ENCODE measurements at regions of chr4 and their contacts with region 1.

Region 1: GRCh38 chr4:173146451-173146850 is 22.2 kb upstream of the GALNT7 start:
- DNase-seq: no peak
- ATAC-seq: no peak
- H3K4me3 ChIP-seq: no peak overlapping the region
- H3K4me3 Mint-ChIP-seq: no peak overlapping the region
- H3K27ac ChIP-seq: no peak overlapping the region
- H3K27ac Mint-ChIP-seq: no peak overlapping the region
- H3K4me1 ChIP-seq: no peaks in the 10 kb centered on the region
- H3K4me1 Mint-ChIP-seq: no peaks in the 10 kb centered on the region
- H3K27me3 ChIP-seq: no peaks in the 10 kb centered on the region
- H3K27me3 Mint-ChIP-seq: no peaks in the 10 kb centered on the region
- CTCF ChIP-seq: no peak

Region 2: GRCh38 chr4:173111031-173111430 is 35.4 kb before region 1 on chr4:
- CTCF ChIA-PET with region 1: no interaction called
- POLR2A ChIA-PET with region 1: no interaction called
- intact Hi-C with region 1: loop called in 1 of 2 experiments (anchors 1 kb)
- DNase-seq: no peak
- ATAC-seq: no peak
- H3K4me3 ChIP-seq: no peak overlapping the region
- H3K4me3 Mint-ChIP-seq: no peak overlapping the region
- H3K27ac ChIP-seq: no peak overlapping the region
- H3K27ac Mint-ChIP-seq: no peak overlapping the region
- H3K4me1 ChIP-seq: no peaks in the 10 kb centered on the region
- H3K4me1 Mint-ChIP-seq: no peaks in the 10 kb centered on the region
- H3K27me3 ChIP-seq: no peaks in the 10 kb centered on the region
- H3K27me3 Mint-ChIP-seq: peaks cover 2% of the 10 kb centered on the region
- CTCF ChIP-seq: no peak

Measured in CD8-positive, alpha-beta T cell (primary cell).